Activated T-helper 1 cell treated with anti-CD3 and anti-CD28 coated beads, Interleukin-12 subunit alpha, Interleukin-12 subunit beta, Interleukin-2, Interleukin-4 antibody, amounts not matched to agents 30 ng/mL and 10 ng/mL and 1 ng/mL, durations not matched to agents 14 hours and 24 hours and 36 hours (primary cell): ENCODE measurements at regions of chr1 and their contacts with region 1.

Region 1: DNA sequence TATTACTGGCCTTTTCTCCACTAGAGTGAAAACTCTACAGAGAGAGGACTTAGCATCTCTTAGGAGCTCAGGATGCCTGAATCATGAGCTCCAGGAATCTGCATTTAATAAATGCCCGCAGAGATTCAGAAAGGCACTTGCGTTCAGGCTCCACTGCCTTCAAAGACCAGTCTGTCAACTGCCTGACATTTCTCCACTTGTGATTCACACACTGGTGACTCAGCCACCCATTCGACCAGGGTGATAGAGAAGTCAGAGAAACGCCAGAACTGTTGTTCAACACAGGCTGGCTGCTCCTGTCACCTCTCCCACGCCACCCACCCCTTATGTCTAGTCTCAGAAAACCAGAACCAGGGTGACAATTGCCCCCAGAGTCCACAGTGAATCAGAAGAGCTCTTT is 26.9 kb upstream of the LBR start:
- DNase-seq: peak; percentile 48
- H3K4me3 Mint-ChIP-seq: peak overlapping the region; percentile 61
- H3K27ac Mint-ChIP-seq: peak overlapping the region; percentile 83
- H3K4me1 Mint-ChIP-seq: peaks cover 53% of the 10 kb centered on the region
- H3K27me3 Mint-ChIP-seq: no peaks in the 10 kb centered on the region

Region 2: DNA sequence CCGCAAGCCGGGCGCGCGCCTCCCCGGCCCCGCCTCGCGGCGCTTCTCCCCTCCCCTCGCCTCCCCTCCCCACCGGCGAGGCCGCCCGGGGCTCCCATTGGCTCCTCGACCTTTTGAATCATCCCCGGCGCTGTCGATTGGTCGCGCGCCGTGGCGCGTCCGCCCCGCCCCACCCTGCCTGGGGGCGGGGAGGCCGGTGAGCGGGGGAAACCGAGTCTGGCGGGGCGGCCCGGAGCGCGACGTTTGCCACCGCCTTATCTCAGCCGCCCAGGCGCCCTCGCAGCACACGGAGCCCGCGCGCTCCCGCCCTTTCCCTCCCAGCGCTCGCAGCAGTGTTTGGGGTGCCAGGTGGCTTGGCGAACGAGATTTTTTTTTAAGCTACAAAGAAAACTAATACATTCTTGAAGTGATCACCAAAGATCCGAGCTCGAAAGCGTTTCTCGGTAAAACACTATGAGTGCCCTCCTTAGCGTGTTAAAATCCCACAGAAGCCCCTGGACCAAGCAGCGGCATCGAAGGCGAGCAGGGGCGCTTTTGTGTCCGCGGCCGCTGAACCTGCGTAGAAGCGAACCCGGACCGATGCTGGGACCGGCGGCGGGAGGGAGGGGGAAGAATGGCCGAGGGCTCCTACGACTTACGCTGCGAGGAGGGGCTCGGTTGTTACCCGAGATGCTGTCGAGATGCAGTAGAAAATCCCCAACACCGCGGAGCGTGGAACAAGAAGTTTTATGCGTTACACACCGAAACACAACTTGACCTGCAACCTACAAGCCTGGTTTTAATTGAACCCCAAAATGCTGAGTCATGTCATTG is 26.5 kb before region 1 on chr1:
- intact Hi-C with region 1: loop called (anchors 1 kb)
- DNase-seq: peak; percentile 94
- H3K4me3 Mint-ChIP-seq: peak overlapping the region; percentile 83
- H3K27ac Mint-ChIP-seq: peak overlapping the region; percentile 90
- H3K4me1 Mint-ChIP-seq: peaks cover 56% of the 10 kb centered on the region
- H3K27me3 Mint-ChIP-seq: no peaks in the 10 kb centered on the region

Region 3: GRCh38 chr1:225441314-225442122 is 13.2 kb before region 1 on chr1:
- intact Hi-C with region 1: loop called (anchors 1 kb)
- DNase-seq: no peak
- H3K4me3 Mint-ChIP-seq: peak overlapping the region; percentile 55
- H3K27ac Mint-ChIP-seq: peak overlapping the region; percentile 76
- H3K4me1 Mint-ChIP-seq: peaks cover 51% of the 10 kb centered on the region
- H3K27me3 Mint-ChIP-seq: peaks cover 2% of the 10 kb centered on the region

Region 4: DNA sequence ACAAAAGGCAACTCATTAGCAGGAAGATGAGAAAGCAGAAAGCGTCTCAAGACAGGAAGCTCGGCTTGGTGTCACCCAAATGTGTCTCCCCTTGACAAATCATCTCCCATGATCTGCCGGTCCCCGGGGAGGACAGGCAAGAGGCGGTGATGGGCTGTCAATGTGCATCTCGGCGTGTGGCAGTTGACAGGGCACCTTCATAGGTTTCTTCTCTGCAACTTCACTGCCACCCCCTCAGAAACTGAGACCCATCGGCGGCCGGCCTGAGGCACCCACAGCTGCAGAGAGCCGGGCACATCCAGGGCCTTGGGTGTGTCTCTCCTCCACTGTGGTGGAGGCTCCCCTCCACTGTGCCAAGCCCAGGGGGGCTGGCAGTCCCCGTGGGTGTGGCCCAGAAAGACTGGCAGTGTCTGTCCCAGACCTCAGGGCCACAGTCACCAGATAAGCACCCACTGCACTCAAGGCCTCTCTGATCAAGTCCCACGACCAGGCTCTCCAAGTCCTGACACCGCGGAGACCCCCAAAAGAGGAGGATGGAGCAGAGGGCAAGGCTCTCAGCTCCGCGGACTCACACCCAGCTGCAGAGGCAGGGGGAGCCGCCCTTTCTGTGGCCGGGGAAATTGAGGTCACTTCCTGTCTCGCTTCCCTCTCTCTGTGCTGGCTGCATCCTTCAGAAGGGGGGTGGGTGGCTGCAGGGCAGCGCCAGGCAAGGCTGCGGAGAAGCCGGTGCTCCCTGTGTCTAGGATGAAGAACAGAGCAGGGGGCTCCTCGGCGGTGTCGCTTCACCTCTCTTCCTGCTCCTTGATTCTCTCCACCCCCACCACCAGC is 12.7 kb after region 1 on chr1:
- intact Hi-C with region 1: loop called (anchors 1 kb)
- DNase-seq: peak; percentile 80
- H3K4me3 Mint-ChIP-seq: peak overlapping the region; percentile 92
- H3K27ac Mint-ChIP-seq: peak overlapping the region; percentile 95
- H3K4me1 Mint-ChIP-seq: peaks cover 45% of the 10 kb centered on the region
- H3K27me3 Mint-ChIP-seq: no peaks in the 10 kb centered on the region

Region 5: GRCh38 chr1:225746361-225747179 is 291.8 kb after region 1 on chr1:
- intact Hi-C with region 1: no loop called
- DNase-seq: no peak
- H3K4me3 Mint-ChIP-seq: no peak overlapping the region
- H3K27ac Mint-ChIP-seq: no peak overlapping the region
- H3K4me1 Mint-ChIP-seq: no peaks in the 10 kb centered on the region
- H3K27me3 Mint-ChIP-seq: peaks cover 2% of the 10 kb centered on the region